Activated T-helper 2 cell treated with anti-CD3 and anti-CD28 coated beads, Interferon-gamma antibody, Interleukin-2, Interleukin-4, amounts not matched to agents 10 μg/mL and 5 μg/mL and 100 μg/mL, durations not matched to agents 14 hours and 24 hours and 36 hours (primary cell): ENCODE measurements at regions of chr1 and their contacts with region 1.

Region 1: GRCh38 chr1:6779089-6779805 is 6.0 kb upstream of the CAMTA1 start:
- DNase-seq: no peak
- H3K4me3 Mint-ChIP-seq: no peak overlapping the region
- H3K27ac Mint-ChIP-seq: no peak overlapping the region
- H3K4me1 Mint-ChIP-seq: peaks cover 23% of the 10 kb centered on the region
- H3K27me3 Mint-ChIP-seq: peaks cover 20% of the 10 kb centered on the region

Region 2: GRCh38 chr1:6743189-6744101 is 35.8 kb before region 1 on chr1:
- intact Hi-C with region 1: loop called (anchors 1 kb)
- DNase-seq: peak; percentile 14
- H3K4me3 Mint-ChIP-seq: no peak overlapping the region
- H3K27ac Mint-ChIP-seq: no peak overlapping the region
- H3K4me1 Mint-ChIP-seq: peaks cover 7% of the 10 kb centered on the region
- H3K27me3 Mint-ChIP-seq: peaks cover 9% of the 10 kb centered on the region